Activated CD4-positive, alpha-beta T cell treated with anti-CD3 and anti-CD28 coated beads, Interleukin-2, amount 10 ng/mL, durations not matched to agents 24 days and 14 days (primary cell): ENCODE measurements at regions of chr2 and their contacts with region 1.

Region 1: GRCh38 chr2:200306196-200306930 is at the start of gene SPATS2L:
- DNase-seq: peak; percentile 88
- H3K4me3 Mint-ChIP-seq: peak within 1 kb of the TSS; percentile 90
- H3K27ac Mint-ChIP-seq: peak within 1 kb of the TSS; percentile 88
- H3K4me1 Mint-ChIP-seq: peaks cover 29% of the 10 kb centered on the region
- H3K27me3 Mint-ChIP-seq: peaks cover 25% of the 10 kb centered on the region
- total RNA-seq, gene SPATS2L: 42.0 and 42.9 TPM in 2 replicates

Region 2: GRCh38 chr2:199911052-199911876 is 395.1 kb before region 1 on chr2 and contains the start of gene C2orf69:
- intact Hi-C with region 1: loop called (anchors 5 kb)
- DNase-seq: peak; percentile 97
- H3K4me3 Mint-ChIP-seq: peak within 1 kb of the TSS; percentile 99
- H3K27ac Mint-ChIP-seq: peak within 1 kb of the TSS; percentile 97
- H3K4me1 Mint-ChIP-seq: peaks cover 31% of the 10 kb centered on the region
- H3K27me3 Mint-ChIP-seq: peaks cover 6% of the 10 kb centered on the region
- total RNA-seq, gene C2orf69: 17.1 and 17.4 TPM in 2 replicates

Region 3: GRCh38 chr2:199979832-199980628 is 326.3 kb before region 1 on chr2:
- intact Hi-C with region 1: loop called (anchors 5 kb)
- DNase-seq: peak; percentile 94
- H3K4me3 Mint-ChIP-seq: no peak overlapping the region
- H3K27ac Mint-ChIP-seq: no peak overlapping the region
- H3K4me1 Mint-ChIP-seq: peaks cover 23% of the 10 kb centered on the region
- H3K27me3 Mint-ChIP-seq: no peaks in the 10 kb centered on the region

Region 4: DNA sequence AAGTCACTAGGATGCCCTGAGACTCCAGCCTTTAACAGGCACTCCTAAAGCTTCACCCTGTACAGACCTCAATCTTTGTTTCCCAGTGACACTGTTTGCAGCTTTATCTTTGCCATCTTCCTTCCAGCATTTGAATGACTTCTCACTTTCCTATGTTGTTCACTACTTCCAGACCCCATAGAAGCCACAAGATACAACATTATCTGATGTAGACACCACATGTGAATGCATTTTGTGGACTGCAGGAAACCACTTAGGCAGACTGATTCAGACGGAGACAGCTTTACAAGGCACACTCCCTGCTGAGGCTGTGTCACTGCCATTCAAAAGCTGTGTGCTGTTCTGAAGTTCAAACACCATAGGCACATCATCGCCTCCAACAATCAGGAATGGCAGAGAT is 67.1 kb before region 1 on chr2:
- intact Hi-C with region 1: no loop called
- DNase-seq: peak; percentile 62
- H3K4me3 Mint-ChIP-seq: no peak overlapping the region
- H3K27ac Mint-ChIP-seq: no peak overlapping the region
- H3K4me1 Mint-ChIP-seq: peaks cover 4% of the 10 kb centered on the region
- H3K27me3 Mint-ChIP-seq: peaks cover 50% of the 10 kb centered on the region

Region 5: DNA sequence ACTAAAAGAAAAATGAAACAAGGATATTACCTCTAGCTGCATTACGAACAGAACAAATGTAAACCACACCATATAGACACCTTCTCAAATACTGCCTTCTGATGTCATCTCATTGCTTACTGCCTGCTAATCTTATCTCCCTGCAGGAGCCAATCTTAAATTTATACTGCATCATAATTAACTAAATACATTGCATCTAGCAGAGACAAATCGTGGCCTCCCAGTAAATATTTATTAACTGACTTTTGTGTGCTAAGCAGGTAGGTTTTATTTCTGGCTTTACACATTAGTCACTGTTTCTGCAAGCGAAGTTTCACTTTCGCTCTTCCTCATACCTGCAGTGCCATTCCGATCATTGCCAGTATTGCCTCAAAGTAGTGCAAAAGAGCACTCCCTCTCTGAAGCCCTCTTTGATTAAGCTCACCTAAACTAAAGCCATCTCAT is 67.6 kb after region 1 on chr2:
- intact Hi-C with region 1: loop called (anchors 1 kb)
- DNase-seq: peak; percentile 86
- H3K4me3 Mint-ChIP-seq: peak overlapping the region; percentile 84
- H3K27ac Mint-ChIP-seq: peak overlapping the region; percentile 80
- H3K4me1 Mint-ChIP-seq: peaks cover 52% of the 10 kb centered on the region
- H3K27me3 Mint-ChIP-seq: no peaks in the 10 kb centered on the region

Region 6: DNA sequence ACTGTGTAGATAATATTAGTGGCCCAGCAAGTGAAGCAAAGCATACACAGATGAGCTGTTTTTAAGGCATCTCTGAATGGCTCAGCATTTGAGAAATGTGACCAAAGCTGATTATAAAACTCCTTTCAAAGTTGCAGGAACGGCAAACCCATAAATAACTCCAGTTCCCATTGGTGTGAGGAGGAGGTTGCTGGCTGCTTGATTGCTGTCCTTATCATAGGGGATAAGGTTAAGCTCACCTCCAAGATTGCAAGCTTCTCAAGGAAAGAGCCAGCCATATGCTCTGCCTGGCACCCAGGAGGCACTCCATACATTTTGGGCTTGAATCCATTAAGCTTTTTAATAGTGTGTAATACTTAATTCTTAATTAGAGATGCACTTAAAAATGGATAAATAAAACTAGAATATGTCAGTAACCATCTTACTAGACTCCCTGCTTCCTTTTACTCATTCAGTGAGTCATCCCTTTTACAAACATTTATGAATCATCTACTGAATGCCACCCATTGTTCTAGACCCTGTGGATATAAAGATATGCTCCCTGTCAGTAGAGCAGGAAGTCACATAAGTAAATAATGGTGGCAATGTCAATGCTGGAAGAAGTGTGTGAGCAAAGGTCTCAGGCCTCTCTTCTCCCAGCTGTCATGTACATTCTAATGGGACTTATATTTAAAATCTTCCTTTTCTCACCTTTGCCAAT is 99.4 kb after region 1 on chr2:
- intact Hi-C with region 1: loop called (anchors 1 kb)
- DNase-seq: no peak
- H3K4me3 Mint-ChIP-seq: peak overlapping the region; percentile 38
- H3K27ac Mint-ChIP-seq: peak overlapping the region; percentile 68
- H3K4me1 Mint-ChIP-seq: peaks cover 47% of the 10 kb centered on the region
- H3K27me3 Mint-ChIP-seq: no peaks in the 10 kb centered on the region

Region 7: GRCh38 chr2:200471324-200471848 is 165.0 kb after region 1 on chr2:
- intact Hi-C with region 1: loop called (anchors 2 kb)
- DNase-seq: peak; percentile 77
- H3K4me3 Mint-ChIP-seq: no peak overlapping the region
- H3K27ac Mint-ChIP-seq: no peak overlapping the region
- H3K4me1 Mint-ChIP-seq: peaks cover 30% of the 10 kb centered on the region
- H3K27me3 Mint-ChIP-seq: no peaks in the 10 kb centered on the region

Region 8: DNA sequence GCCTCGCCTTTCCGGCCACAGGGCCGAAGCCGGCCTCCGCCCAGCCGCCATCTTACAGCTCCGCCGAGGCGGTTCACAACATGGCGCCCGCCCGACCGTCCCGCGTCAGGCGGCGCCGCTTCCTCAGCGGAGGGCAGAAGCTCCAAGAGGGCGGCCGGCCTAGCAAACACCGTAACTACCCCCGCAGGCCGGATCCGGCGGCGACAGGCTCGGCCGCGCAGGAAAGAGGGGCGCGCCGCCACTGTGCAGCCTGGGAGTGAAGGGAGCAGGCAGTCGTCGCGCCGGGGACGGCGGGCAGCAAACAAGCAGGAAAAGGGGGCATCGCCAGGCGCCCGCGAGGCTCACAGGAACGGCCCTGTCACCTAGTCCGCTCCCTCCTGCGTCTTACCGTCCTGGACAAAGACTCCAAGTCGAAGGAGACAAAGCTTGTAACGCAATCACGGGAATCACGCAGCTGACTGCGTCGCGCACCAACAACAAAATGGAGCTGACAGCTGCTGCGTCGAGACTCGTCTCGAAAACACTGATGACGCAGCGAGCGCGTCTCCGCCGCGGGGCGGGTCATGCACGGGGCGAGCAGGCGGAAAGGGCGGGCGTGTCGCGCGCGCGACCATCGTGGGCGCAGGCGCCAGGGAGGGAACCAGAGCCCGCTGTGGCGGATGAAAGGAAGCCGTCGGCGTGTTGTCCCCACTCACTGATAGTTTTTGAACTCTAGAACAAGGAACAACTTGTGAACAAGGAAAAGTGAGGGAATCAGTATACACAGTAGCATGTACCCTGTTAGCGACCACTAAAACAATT is 558.0 kb after region 1 on chr2 and contains the start of gene CLK1:
- intact Hi-C with region 1: loop called (anchors 5 kb)
- DNase-seq: peak; percentile 99
- H3K4me3 Mint-ChIP-seq: peak within 1 kb of the TSS; percentile 91
- H3K27ac Mint-ChIP-seq: peak within 1 kb of the TSS; percentile 94
- H3K4me1 Mint-ChIP-seq: peaks cover 32% of the 10 kb centered on the region
- H3K27me3 Mint-ChIP-seq: no peaks in the 10 kb centered on the region
- total RNA-seq, gene CLK1: 99.3 and 100 TPM in 2 replicates